Psoas muscle (tissue), 8 donors: ENCODE measurements at regions of chr5 and their contacts with region 1.

Region 1: DNA sequence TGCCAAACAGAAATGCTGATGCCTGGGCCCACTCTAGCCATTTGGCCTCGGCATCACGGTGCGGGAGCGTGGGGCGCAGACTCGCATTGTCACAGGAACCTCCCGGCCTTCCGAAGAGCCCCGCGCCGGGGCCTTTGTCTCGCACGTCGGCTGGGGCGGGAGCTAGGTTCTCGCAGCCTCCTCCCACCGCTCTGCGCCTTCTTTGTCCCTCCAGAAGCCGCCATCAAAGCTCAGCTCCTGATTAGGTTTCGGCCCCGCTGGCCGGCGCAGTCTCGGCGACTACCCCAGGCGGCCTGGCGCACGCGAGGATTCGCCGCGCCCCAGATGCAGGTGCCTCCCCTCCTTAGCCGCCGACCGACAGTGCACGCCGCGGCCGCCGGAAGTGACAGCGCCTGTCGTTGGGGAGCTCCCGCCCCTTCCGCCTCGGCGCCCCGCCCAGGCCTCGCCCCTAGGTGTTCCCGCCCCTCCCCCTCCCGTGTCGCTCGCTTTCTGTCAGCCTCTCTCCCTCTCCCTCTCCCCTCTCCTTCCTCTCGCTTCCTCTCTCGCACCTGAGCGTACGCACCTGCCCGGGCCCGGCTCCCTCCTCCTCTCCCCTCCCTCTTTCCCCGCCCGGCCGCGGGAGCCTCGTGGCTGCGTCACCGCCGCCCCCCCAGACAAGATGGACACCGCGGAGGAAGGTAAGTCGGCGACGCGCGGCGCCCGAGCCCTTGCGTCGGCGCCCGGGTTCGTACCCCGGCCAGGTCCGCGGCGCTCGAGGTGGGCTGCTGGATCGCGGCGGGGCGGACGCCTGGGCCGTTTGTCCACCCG is at the start of gene MARCHF6:
- DNase-seq: peak; percentile 95 to 98
- ATAC-seq: peak; percentile 96 to 98 (median 96)
- H3K4me3 ChIP-seq: peak within 1 kb of the TSS; percentile 95
- H3K27ac ChIP-seq: peak within 1 kb of the TSS; percentile 99
- H3K4me1 ChIP-seq: peaks cover 37% of the 10 kb centered on the region
- H3K27me3 ChIP-seq: no peaks in the 10 kb centered on the region
- CTCF ChIP-seq: no peak
- total RNA-seq, gene MARCHF6: 160 to 250 (median 193) TPM

Region 2: DNA sequence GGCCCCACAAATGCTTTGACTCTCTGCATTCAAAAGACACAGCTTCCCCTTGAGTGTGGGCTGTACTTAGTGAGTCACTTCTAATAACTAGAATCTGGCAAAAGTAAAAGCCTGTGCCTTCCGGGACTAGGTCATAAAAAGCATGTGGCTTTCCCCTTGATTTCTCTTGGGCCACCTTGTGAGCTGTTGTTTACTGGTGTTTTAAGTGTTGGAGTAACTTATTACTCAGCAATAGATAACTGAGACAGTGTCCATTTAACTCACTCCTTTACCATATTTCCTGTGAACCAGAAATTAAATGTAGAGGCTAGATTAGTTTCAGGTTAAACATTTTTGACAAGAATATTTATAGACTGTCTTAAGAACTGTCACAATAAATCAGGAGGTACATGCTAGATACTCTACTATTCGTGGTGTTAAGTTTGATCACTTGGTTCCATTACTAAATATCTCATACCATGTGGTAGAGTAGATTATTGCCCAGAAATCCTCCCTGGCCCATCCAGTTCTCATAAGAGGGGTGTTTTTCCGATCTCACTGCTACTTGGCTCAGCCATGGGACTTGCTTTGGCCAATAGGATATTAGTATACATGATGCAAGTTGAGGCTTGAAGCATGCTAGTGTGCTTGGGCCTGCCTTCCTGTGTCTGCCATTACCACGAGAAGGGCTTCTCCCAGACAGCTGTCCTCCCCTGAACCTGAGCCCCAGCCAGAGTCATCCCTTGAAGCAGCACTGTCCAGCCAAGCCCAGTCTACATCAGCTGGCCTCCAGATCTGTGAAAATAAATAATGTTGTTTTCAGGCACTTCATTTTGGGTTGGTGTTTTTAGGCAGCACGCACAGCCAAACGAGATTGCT is 35.4 kb before region 1 on chr5:
- intact Hi-C with region 1: loop called in 1 of 2 experiments (anchors 5 kb)
- DNase-seq: no peak
- ATAC-seq: peak; percentile 54 to 80 (median 66)
- H3K4me3 ChIP-seq: no peak overlapping the region
- H3K27ac ChIP-seq: peak overlapping the region; percentile 92
- H3K4me1 ChIP-seq: peaks cover 20% of the 10 kb centered on the region
- H3K27me3 ChIP-seq: no peaks in the 10 kb centered on the region
- CTCF ChIP-seq: no peak